ENCODE measurements at regions of chr1 and their contacts with region 1.

Region 1: GRCh38 chr1:2460996-2461751 is 14.9 kb upstream of the PLCH2 start:
- DNase-seq: no peak

Region 2: GRCh38 chr1:2545759-2546514 is 84.8 kb after region 1 on chr1:
- intact Hi-C with region 1: loop called in 1 of 2 experiments (anchors 1 kb)
- DNase-seq: peak; percentile 96